Activated CD4-positive, alpha-beta T cell treated with anti-CD3 and anti-CD28 coated beads, Interleukin-2, amount 10 ng/mL, durations not matched to agents 24 days and 14 days (primary cell): ENCODE measurements at regions of chr4 and their contacts with region 1.

Region 1: GRCh38 chr4:84503495-84504437 is 4.7 kb upstream of the NKX6-1 start:
- DNase-seq: peak; percentile 75
- H3K4me3 Mint-ChIP-seq: no peak overlapping the region
- H3K27ac Mint-ChIP-seq: no peak overlapping the region
- H3K4me1 Mint-ChIP-seq: peaks cover 5% of the 10 kb centered on the region
- H3K27me3 Mint-ChIP-seq: peaks cover 70% of the 10 kb centered on the region

Region 2: DNA sequence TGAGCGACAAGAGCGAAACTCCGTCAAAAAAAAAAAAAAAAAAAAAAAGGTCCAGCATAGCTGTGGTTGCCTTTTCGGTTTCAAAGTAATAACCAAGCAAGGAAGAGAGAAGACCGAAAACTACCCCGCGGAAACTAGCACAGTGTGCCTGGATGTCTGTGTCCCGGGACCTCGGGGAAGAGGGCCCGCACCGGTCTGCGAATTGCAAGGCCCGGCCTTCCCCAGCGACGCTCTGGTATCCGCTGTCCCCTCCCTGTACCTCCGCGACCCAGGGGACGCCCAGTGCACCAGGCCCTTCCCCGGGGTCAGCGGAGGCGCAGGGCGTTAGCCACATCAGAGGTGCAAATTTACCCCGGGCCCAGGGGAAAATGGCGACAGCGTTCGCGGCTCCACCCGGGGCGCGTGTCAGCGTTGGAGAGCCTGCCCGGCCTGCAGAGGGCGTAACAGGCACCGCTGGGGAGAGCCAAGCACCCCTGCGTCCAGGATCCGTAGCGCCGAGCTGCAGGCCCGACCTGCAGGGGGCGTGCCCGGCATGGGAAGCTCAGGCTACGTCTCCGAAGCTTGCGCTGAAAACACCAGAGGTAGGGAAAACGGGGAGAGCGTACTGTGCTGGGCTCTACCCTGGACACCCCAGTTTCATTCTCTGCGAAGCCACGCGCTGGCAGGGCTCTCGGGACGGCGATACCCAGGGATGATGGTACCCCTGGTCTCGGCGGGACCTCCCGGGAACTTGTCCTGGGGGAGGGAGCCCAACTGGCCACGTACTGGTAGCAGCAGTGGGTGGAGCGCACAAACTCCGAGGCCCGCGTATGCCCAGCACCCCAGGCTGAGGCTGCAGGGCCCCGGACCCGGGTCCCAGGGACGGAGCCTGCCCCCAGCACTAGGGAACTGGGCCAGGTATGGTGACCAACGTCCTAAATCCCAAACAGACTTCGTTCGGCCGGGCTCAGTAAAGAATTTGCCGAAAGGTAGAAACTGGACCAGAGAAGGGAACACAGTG is 20.9 kb before region 1 on chr4:
- intact Hi-C with region 1: loop called (anchors 1 kb)
- DNase-seq: no peak
- H3K4me3 Mint-ChIP-seq: no peak overlapping the region
- H3K27ac Mint-ChIP-seq: no peak overlapping the region
- H3K4me1 Mint-ChIP-seq: peaks cover 2% of the 10 kb centered on the region
- H3K27me3 Mint-ChIP-seq: peaks cover 79% of the 10 kb centered on the region

Region 3: GRCh38 chr4:84966383-84967242 is 462.8 kb after region 1 on chr4 and contains the start of gene WDFY3:
- intact Hi-C with region 1: loop called (anchors 5 kb)
- DNase-seq: peak; percentile 58
- H3K4me3 Mint-ChIP-seq: peak within 1 kb of the TSS; percentile 83
- H3K27ac Mint-ChIP-seq: peak within 1 kb of the TSS; percentile 16
- H3K4me1 Mint-ChIP-seq: peaks cover 7% of the 10 kb centered on the region
- H3K27me3 Mint-ChIP-seq: peaks cover 31% of the 10 kb centered on the region
- total RNA-seq, gene WDFY3: 0.59 and 0.75 TPM in 2 replicates